Left cardiac atrium (tissue), 4 donors: ENCODE measurements at regions of chr2 and their contacts with region 1.

Region 1: GRCh38 chr2:170409164-170409535 is 231.2 kb downstream of the MYO3B start:
- DNase-seq: peak; percentile 71
- ATAC-seq: peak; percentile 59 to 68

Region 2: DNA sequence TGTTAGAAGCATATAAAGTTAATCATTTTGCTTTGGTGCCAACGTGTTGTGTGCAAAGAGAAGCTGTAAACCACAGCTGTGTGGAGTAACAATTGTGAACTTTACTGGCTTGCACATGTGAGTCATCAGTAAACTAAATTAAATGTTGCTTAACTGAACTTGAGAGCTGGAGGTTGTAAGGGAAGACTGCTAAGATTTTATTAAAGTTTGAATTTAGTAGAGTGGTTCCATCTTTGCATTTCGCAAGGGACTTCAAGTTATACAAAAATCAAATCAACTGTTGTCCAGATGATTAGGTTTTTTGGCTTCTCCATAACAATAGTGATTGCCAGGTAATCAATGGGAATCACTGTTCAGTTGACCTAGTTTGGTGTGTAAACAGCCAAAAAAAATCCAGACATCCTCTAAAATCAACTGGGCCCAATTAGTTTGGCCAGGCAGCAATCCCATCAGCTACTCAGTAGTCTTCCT is 16.2 kb after region 1 on chr2:
- intact Hi-C with region 1: no loop called
- DNase-seq: no peak
- ATAC-seq: no peak

Region 3: GRCh38 chr2:170651624-170652325 is 242.6 kb after region 1 on chr2:
- intact Hi-C with region 1: no loop called
- DNase-seq: no peak
- ATAC-seq: no peak

Region 4: GRCh38 chr2:170766693-170767092 is 357.5 kb after region 1 on chr2:
- intact Hi-C with region 1: loop called in 1 of 2 experiments (anchors 5 kb)
- DNase-seq: no peak
- ATAC-seq: no peak